B cell (primary cell): ENCODE measurements at regions of chr3 and their contacts with region 1.

Region 1: DNA sequence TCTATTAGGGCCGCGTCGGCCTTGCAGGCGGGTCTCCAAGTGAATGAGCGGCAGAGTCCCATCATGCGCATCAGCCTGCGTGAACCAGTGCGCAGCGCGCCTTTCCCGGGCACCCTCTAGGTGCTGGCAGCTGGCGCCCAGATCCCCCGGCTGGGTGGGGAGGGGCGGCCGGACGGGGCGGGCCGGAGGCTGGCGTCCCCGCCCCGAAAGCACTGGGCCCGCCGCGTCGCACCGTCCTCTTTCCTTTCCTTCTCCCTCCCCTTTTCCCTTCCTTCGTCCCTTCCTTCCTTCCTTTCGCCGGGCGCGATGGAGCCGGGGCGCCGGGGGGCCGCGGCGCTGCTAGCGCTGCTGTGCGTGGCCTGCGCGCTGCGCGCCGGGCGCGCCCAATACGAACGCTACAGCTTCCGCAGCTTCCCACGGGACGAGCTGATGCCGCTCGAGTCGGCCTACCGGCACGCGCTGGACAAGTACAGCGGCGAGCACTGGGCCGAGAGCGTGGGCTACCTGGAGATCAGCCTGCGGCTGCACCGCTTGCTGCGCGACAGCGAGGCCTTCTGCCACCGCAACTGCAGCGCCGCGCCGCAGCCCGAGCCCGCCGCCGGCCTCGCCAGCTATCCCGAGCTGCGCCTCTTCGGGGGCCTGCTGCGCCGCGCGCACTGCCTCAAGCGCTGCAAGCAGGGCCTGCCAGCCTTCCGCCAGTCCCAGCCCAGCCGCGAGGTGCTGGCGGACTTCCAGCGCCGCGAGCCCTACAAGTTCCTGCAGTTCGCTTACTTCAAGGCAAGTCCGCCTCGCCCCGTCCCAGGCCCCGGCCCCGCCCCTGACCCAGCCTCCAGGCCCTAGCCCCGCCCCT is at the start of gene CRTAP:
- DNase-seq: peak; percentile 89
- ATAC-seq: peak; percentile 87
- H3K4me3 ChIP-seq: peak within 1 kb of the TSS; percentile 59 to 82 (median 74)
- H3K4me3 Mint-ChIP-seq: peak within 1 kb of the TSS; percentile 94
- H3K27ac ChIP-seq: peak within 1 kb of the TSS; percentile 69 to 76
- H3K27ac Mint-ChIP-seq: peak within 1 kb of the TSS; percentile 94
- H3K4me1 ChIP-seq: peaks cover 43 to 44% of the 10 kb centered on the region in 2 donors
- H3K4me1 Mint-ChIP-seq: peaks cover 48% of the 10 kb centered on the region
- H3K27me3 ChIP-seq: no peaks in the 10 kb centered on the region
- H3K27me3 Mint-ChIP-seq: no peaks in the 10 kb centered on the region
- CTCF ChIP-seq: no peak
- total RNA-seq, gene CRTAP: 55.0 and 57.7 TPM in 2 replicates

Region 2: DNA sequence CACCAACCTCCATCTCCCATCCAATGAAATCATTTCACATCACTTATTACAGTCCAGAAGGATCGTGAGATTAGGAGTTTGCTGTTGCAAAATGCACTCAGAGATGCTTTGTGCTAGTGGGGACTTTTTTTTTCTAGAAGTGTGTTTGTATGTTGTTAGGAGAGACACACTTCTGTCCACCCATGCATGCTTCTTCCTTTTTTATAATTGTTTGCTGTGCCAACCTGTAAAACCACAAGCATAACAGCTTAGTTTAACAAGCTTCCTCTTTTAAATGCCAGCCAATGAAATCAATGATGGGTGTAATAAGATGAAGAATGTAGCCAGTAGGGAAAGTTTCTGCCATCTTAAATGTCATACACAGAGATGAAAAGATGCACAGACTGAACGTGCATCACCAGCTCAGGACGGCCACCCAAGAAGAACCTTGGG is 1886.8 kb before region 1 on chr3:
- CTCF ChIA-PET with region 1: no interaction called
- POLR2A ChIA-PET with region 1: no interaction called
- intact Hi-C with region 1: loop called (anchors 5 kb)
- DNase-seq: peak; percentile 90
- ATAC-seq: peak; percentile 83
- H3K4me3 ChIP-seq: peak overlapping the region in 2 of 5 experiments; percentile 6 to 8
- H3K4me3 Mint-ChIP-seq: peak overlapping the region; percentile 80
- H3K27ac ChIP-seq: peak overlapping the region; percentile 86 to 91
- H3K27ac Mint-ChIP-seq: peak overlapping the region; percentile 99
- H3K4me1 ChIP-seq: peaks cover 77 to 84% of the 10 kb centered on the region in 2 donors
- H3K4me1 Mint-ChIP-seq: peaks cover 76% of the 10 kb centered on the region
- H3K27me3 ChIP-seq: no peaks in the 10 kb centered on the region
- H3K27me3 Mint-ChIP-seq: no peaks in the 10 kb centered on the region
- CTCF ChIP-seq: no peak

Region 3: DNA sequence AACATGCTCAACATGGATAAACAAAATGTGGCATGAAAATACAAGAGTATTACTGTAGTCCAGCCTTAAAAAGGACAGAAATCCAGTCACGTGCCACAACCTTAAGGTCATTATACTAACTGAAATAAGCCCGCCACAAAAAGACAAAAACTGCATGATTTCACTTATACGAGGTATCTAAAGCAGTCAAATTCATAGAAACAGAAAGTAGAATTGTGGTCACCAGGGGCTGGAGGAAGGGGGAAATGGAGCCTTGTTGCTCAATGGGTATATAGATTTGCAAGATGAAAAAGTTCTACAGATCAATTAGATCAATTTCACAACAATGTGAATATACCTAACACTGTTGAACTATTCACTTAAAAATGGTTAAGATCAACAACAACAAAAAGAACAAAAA is 24.5 kb before region 1 on chr3:
- CTCF ChIA-PET with region 1: no interaction called
- POLR2A ChIA-PET with region 1: interaction called, 14 read pairs
- intact Hi-C with region 1: loop called (anchors 2 kb)
- DNase-seq: peak; percentile 72
- ATAC-seq: peak; percentile 84
- H3K4me3 ChIP-seq: peak overlapping the region in 2 of 5 experiments; percentile 3 to 46
- H3K4me3 Mint-ChIP-seq: peak overlapping the region; percentile 49
- H3K27ac ChIP-seq: peak overlapping the region; percentile 48 to 70
- H3K27ac Mint-ChIP-seq: peak overlapping the region; percentile 64
- H3K4me1 ChIP-seq: peaks cover 21 to 31% of the 10 kb centered on the region in 2 donors
- H3K4me1 Mint-ChIP-seq: peaks cover 67% of the 10 kb centered on the region
- H3K27me3 ChIP-seq: no peaks in the 10 kb centered on the region
- H3K27me3 Mint-ChIP-seq: no peaks in the 10 kb centered on the region
- CTCF ChIP-seq: no peak

Region 4: GRCh38 chr3:33096093-33096868 is 17.7 kb before region 1 on chr3:
- CTCF ChIA-PET with region 1: interaction called, 4 read pairs
- POLR2A ChIA-PET with region 1: interaction called, 8 read pairs
- intact Hi-C with region 1: loop called (anchors 1 kb)
- DNase-seq: peak; percentile 83
- ATAC-seq: peak; percentile 63
- H3K4me3 ChIP-seq: peak overlapping the region; percentile 83 to 100 (median 94)
- H3K4me3 Mint-ChIP-seq: peak overlapping the region; percentile 96
- H3K27ac ChIP-seq: peak overlapping the region; percentile 94 to 96
- H3K27ac Mint-ChIP-seq: peak overlapping the region; percentile 94
- H3K4me1 ChIP-seq: peaks cover 11 to 21% of the 10 kb centered on the region in 2 donors
- H3K4me1 Mint-ChIP-seq: peaks cover 35% of the 10 kb centered on the region
- H3K27me3 ChIP-seq: no peaks in the 10 kb centered on the region
- H3K27me3 Mint-ChIP-seq: no peaks in the 10 kb centered on the region
- CTCF ChIP-seq: no peak

Region 5: DNA sequence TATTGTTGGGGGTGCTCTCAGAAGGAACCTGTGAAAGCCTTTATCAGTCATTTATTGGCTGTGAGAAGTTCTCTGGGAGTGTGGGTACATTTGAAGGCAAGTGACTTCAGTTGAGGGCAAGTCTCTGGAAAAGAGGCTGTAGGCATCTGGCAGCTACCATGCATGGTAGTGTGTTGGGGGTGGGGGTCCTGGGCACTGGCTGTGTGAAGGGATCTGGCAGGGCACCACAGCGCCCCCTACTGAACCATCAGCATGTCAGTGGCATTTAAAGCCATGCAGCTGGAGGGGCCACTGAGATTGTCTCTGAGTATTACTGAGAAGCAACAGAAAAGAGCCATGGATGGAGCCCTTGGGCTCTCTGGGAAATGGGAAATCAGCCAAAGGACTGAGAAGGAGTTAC is 30.4 kb after region 1 on chr3:
- CTCF ChIA-PET with region 1: no interaction called
- POLR2A ChIA-PET with region 1: no interaction called
- intact Hi-C with region 1: no loop called
- DNase-seq: peak; percentile 25
- ATAC-seq: no peak
- H3K4me3 ChIP-seq: no peak overlapping the region
- H3K4me3 Mint-ChIP-seq: no peak overlapping the region
- H3K27ac ChIP-seq: no peak overlapping the region
- H3K27ac Mint-ChIP-seq: no peak overlapping the region
- H3K4me1 ChIP-seq: peaks cover under 1 to 3% of the 10 kb centered on the region in 2 donors
- H3K4me1 Mint-ChIP-seq: peaks cover 8% of the 10 kb centered on the region
- H3K27me3 ChIP-seq: no peaks in the 10 kb centered on the region
- H3K27me3 Mint-ChIP-seq: no peaks in the 10 kb centered on the region
- CTCF ChIP-seq: peak; percentile 55

Region 6: GRCh38 chr3:33440323-33441232 is 326.6 kb after region 1 on chr3 and contains the start of gene UBP1:
- CTCF ChIA-PET with region 1: no interaction called
- POLR2A ChIA-PET with region 1: no interaction called
- intact Hi-C with region 1: loop called (anchors 2 kb)
- DNase-seq: peak; percentile 99
- ATAC-seq: peak; percentile 82
- H3K4me3 ChIP-seq: peak within 1 kb of the TSS; percentile 78 to 100 (median 96)
- H3K4me3 Mint-ChIP-seq: peak within 1 kb of the TSS; percentile 100
- H3K27ac ChIP-seq: peak within 1 kb of the TSS; percentile 95 to 97
- H3K27ac Mint-ChIP-seq: peak within 1 kb of the TSS; percentile 100
- H3K4me1 ChIP-seq: peaks cover 32% of the 10 kb centered on the region in 2 donors
- H3K4me1 Mint-ChIP-seq: peaks cover 48% of the 10 kb centered on the region
- H3K27me3 ChIP-seq: no peaks in the 10 kb centered on the region
- H3K27me3 Mint-ChIP-seq: no peaks in the 10 kb centered on the region
- CTCF ChIP-seq: no peak
- total RNA-seq, gene UBP1: 67.3 and 75.4 TPM in 2 replicates

Region 7: GRCh38 chr3:33798411-33799201 is 684.6 kb after region 1 on chr3 and contains the start of gene PDCD6IP:
- CTCF ChIA-PET with region 1: no interaction called
- POLR2A ChIA-PET with region 1: interaction called, 3 read pairs
- intact Hi-C with region 1: loop called (anchors 5 kb)
- DNase-seq: peak; percentile 95
- ATAC-seq: peak; percentile 86
- H3K4me3 ChIP-seq: peak within 1 kb of the TSS; percentile 89 to 94 (median 93)
- H3K4me3 Mint-ChIP-seq: peak within 1 kb of the TSS; percentile 99
- H3K27ac ChIP-seq: peak within 1 kb of the TSS; percentile 84 to 86
- H3K27ac Mint-ChIP-seq: peak within 1 kb of the TSS; percentile 96
- H3K4me1 ChIP-seq: peaks cover 28 to 32% of the 10 kb centered on the region in 2 donors
- H3K4me1 Mint-ChIP-seq: peaks cover 46% of the 10 kb centered on the region
- H3K27me3 ChIP-seq: no peaks in the 10 kb centered on the region
- H3K27me3 Mint-ChIP-seq: no peaks in the 10 kb centered on the region
- CTCF ChIP-seq: peak; percentile 25
- total RNA-seq, gene PDCD6IP: 276 TPM in 2 replicates